ENCODE measurements at regions of chr3 and their contacts with region 1.

Region 1: DNA sequence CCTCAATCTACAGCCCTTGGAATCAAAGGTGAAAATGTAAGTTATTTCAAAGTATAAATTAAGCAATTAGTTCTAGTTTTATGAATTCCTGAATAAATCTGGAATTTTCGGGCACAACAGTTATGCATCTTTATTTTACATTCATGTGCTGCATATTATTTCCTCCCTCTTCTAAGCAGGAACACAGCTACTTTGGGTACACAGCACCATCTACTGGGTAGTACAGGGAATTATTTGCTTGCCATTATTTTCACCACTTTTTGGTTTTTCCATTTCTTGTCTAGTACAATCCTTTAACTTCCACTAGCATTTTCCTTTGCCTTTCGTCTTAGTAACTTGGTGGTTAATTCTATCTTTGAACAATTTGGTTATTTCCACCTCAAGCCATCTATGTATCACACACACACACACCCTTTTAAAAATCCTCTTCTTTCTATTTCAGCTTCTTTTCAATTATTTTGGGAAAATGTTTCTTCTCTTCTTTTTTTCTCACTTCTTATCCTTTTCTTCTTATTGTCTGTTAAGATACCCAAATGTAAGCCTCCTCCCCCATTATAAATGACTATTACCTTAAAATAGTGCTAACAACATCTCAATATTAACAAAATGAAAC is 451.0 kb downstream of the MFSD1 start:
- DNase-seq: peak; percentile 58
- H3K4me3 Mint-ChIP-seq: no peak overlapping the region
- H3K27ac Mint-ChIP-seq: no peak overlapping the region
- H3K4me1 Mint-ChIP-seq: peaks cover 24% of the 10 kb centered on the region
- H3K27me3 Mint-ChIP-seq: peaks cover 14% of the 10 kb centered on the region
- CTCF ChIP-seq: peak; percentile 95

Region 2: GRCh38 chr3:158659454-158660237 is 593.2 kb before region 1 on chr3:
- CTCF ChIA-PET with region 1: no interaction called
- intact Hi-C with region 1: loop called (anchors 10 kb)
- DNase-seq: peak; percentile 72
- H3K4me3 Mint-ChIP-seq: no peak overlapping the region
- H3K27ac Mint-ChIP-seq: no peak overlapping the region
- H3K4me1 Mint-ChIP-seq: peaks cover 25% of the 10 kb centered on the region
- H3K27me3 Mint-ChIP-seq: no peaks in the 10 kb centered on the region
- CTCF ChIP-seq: peak; percentile 86

Region 3: GRCh38 chr3:158845765-158846350 is 407.0 kb before region 1 on chr3:
- CTCF ChIA-PET with region 1: interaction called, 8 read pairs
- intact Hi-C with region 1: loop called (anchors 1 kb)
- DNase-seq: peak; percentile 65
- H3K4me3 Mint-ChIP-seq: no peak overlapping the region
- H3K27ac Mint-ChIP-seq: no peak overlapping the region
- H3K4me1 Mint-ChIP-seq: no peaks in the 10 kb centered on the region
- H3K27me3 Mint-ChIP-seq: no peaks in the 10 kb centered on the region
- CTCF ChIP-seq: peak; percentile 93

Region 4: DNA sequence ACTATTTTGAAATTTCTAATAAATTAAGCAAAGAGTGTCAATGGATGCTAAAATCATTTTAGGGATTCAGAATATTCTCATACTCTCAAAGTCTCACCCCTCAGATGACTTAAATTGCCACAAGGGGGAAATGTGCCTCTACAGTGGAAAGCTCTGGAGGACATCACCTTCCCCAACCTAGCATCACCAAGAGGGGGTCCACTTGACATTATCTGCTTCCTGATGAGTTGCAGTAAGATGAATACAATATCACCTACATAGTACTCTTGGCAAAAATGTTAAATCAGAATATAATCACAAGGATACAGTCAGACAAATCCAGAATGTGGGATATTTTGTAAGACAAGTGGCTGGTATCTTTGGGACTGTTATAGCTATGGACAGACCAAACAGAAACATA is 160.9 kb before region 1 on chr3:
- CTCF ChIA-PET with region 1: interaction called, 6 read pairs
- intact Hi-C with region 1: loop called (anchors 5 kb)
- DNase-seq: no peak
- H3K4me3 Mint-ChIP-seq: no peak overlapping the region
- H3K27ac Mint-ChIP-seq: no peak overlapping the region
- H3K4me1 Mint-ChIP-seq: no peaks in the 10 kb centered on the region
- H3K27me3 Mint-ChIP-seq: no peaks in the 10 kb centered on the region
- CTCF ChIP-seq: peak; percentile 52

Region 5: GRCh38 chr3:159158213-159158612 is 94.7 kb before region 1 on chr3:
- CTCF ChIA-PET with region 1: interaction called, 20 read pairs
- intact Hi-C with region 1: loop called (anchors 1 kb)
- DNase-seq: peak; percentile 75
- H3K4me3 Mint-ChIP-seq: no peak overlapping the region
- H3K27ac Mint-ChIP-seq: peak overlapping the region; percentile 76
- H3K4me1 Mint-ChIP-seq: peaks cover 26% of the 10 kb centered on the region
- H3K27me3 Mint-ChIP-seq: no peaks in the 10 kb centered on the region
- CTCF ChIP-seq: peak; percentile 63